CD4-positive, alpha-beta memory T cell (primary cell): ENCODE measurements at regions of chr14 and their contacts with region 1.

Region 1: GRCh38 chr14:23953464-23954278 is at the start of gene DHRS4:
- DNase-seq: peak; percentile 74 to 85 (median 83)
- H3K4me3 ChIP-seq: peak within 1 kb of the TSS; percentile 74 to 82
- H3K4me3 Mint-ChIP-seq: peak within 1 kb of the TSS; percentile 95 to 100 (median 98)
- H3K27ac ChIP-seq: peak within 1 kb of the TSS; percentile 72
- H3K27ac Mint-ChIP-seq: peak within 1 kb of the TSS; percentile 84 to 98 (median 96)
- H3K4me1 ChIP-seq: peaks cover 25% of the 10 kb centered on the region
- H3K4me1 Mint-ChIP-seq: peaks cover 13 to 36% (median 27%) of the 10 kb centered on the region in 4 donors
- H3K27me3 ChIP-seq: no peaks in the 10 kb centered on the region
- H3K27me3 Mint-ChIP-seq: no peaks in the 10 kb centered on the region
- total RNA-seq, gene DHRS4: 14.7 to 15.5 TPM

Region 2: GRCh38 chr14:23610090-23610814 is 343.4 kb before region 1 on chr14:
- CTCF ChIA-PET with region 1: no interaction called
- POLR2A ChIA-PET with region 1: no interaction called
- intact Hi-C with region 1: no loop called
- DNase-seq: peak in 4 of 5 donors; percentile 29 to 45 (median 44)
- H3K4me3 ChIP-seq: no peak overlapping the region
- H3K4me3 Mint-ChIP-seq: peak overlapping the region; percentile 54 to 95 (median 84)
- H3K27ac ChIP-seq: peak overlapping the region; percentile 20
- H3K27ac Mint-ChIP-seq: peak overlapping the region; percentile 77 to 97 (median 93)
- H3K4me1 ChIP-seq: peaks cover 29% of the 10 kb centered on the region
- H3K4me1 Mint-ChIP-seq: peaks cover 24 to 44% (median 30%) of the 10 kb centered on the region in 4 donors
- H3K27me3 ChIP-seq: no peaks in the 10 kb centered on the region
- H3K27me3 Mint-ChIP-seq: peaks cover 0 to 2% of the 10 kb centered on the region in 2 donors

Region 3: DNA sequence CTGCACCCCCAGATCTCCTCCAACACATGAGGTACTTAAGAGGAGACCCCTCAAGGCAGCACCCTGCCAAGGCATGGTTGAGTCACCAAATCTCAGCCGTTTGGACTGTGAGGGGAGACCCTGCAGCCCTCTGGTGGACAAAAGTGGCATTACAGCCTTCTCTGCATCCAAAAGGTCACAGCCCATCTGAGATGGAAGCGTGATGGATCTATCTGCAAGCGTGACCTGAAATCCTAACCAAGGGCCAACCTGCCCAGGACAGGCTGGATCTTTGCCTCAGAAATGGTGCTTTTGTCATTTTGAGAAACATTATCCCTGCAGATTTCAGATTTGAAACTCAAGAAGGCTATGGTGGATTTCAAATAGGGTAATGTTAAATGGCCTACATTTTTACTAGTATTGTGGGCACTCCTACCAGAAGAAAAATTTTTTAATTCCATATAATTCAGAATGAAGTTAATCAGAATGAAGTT is 23.8 kb before region 1 on chr14:
- CTCF ChIA-PET with region 1: interaction called, 15 read pairs
- POLR2A ChIA-PET with region 1: interaction called, 4 read pairs
- intact Hi-C with region 1: loop called (anchors 1 kb)
- DNase-seq: peak; percentile 67 to 73 (median 72)
- H3K4me3 ChIP-seq: no peak overlapping the region
- H3K4me3 Mint-ChIP-seq: no peak overlapping the region
- H3K27ac ChIP-seq: no peak overlapping the region
- H3K27ac Mint-ChIP-seq: no peak overlapping the region
- H3K4me1 ChIP-seq: no peaks in the 10 kb centered on the region
- H3K4me1 Mint-ChIP-seq: peaks cover 0 to 2% (median 0%) of the 10 kb centered on the region in 4 donors
- H3K27me3 ChIP-seq: no peaks in the 10 kb centered on the region
- H3K27me3 Mint-ChIP-seq: peaks cover 2 to 6% of the 10 kb centered on the region in 2 donors

Region 4: DNA sequence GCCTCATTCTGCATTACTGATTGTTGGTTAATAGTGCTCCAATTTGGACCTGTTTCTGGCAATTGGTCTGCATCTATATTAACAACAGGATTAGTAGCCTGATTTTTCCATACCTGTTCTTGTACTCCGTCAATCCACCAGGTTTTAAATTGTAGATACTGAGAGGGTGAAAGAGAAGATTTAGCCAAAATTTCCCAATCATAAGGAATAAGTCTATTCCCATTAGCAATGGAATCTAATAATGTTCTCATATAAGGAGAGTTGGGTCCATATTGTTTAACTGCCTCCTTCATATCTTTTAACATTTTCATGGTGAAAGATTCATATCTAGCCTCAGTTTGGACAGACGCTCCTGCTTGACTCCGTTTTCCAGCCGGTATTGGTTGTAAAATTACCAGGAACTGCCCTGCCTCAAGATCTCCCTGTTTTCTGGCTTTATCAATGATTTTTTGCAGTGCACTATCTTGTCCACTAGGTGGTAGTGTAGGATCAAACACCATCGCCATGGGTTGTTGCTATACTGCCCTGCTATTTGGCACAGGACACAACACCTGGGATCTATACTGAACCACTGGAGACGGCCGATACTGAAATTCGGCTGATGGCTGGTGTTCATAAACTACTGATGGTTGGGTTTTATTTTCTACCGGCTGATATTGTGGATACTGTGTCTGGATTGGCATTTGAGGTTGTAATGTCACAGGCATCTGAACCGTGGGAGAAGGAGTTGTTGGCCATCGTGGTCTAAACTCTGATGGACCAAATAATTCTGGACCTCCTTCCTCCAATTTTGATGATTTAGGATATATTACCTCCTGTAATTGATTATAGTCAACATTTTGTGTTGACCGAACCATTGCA is 60.2 kb after region 1 on chr14:
- CTCF ChIA-PET with region 1: interaction called, 4 read pairs
- POLR2A ChIA-PET with region 1: no interaction called
- intact Hi-C with region 1: loop called (anchors 10 kb)
- DNase-seq: peak; percentile 60 to 77 (median 70)
- H3K4me3 ChIP-seq: no peak overlapping the region
- H3K4me3 Mint-ChIP-seq: no peak overlapping the region
- H3K27ac ChIP-seq: no peak overlapping the region
- H3K27ac Mint-ChIP-seq: no peak overlapping the region
- H3K4me1 ChIP-seq: peaks cover 19% of the 10 kb centered on the region
- H3K4me1 Mint-ChIP-seq: peaks cover 19 to 27% (median 23%) of the 10 kb centered on the region in 4 donors
- H3K27me3 ChIP-seq: no peaks in the 10 kb centered on the region
- H3K27me3 Mint-ChIP-seq: peaks cover 0 to 3% of the 10 kb centered on the region in 2 donors

Region 5: GRCh38 chr14:24262821-24263761 is 309.4 kb after region 1 on chr14 and contains the start of gene TGM1:
- CTCF ChIA-PET with region 1: no interaction called
- POLR2A ChIA-PET with region 1: no interaction called
- intact Hi-C with region 1: no loop called
- DNase-seq: no peak
- H3K4me3 ChIP-seq: no peak within 1 kb of the TSS
- H3K4me3 Mint-ChIP-seq: no peak within 1 kb of the TSS
- H3K27ac ChIP-seq: no peak within 1 kb of the TSS
- H3K27ac Mint-ChIP-seq: peak within 1 kb of the TSS in 3 of 7 donors; percentile 8 to 46 (median 37)
- H3K4me1 ChIP-seq: no peaks in the 10 kb centered on the region
- H3K4me1 Mint-ChIP-seq: peaks cover 0 to 5% (median 0%) of the 10 kb centered on the region in 4 donors
- H3K27me3 ChIP-seq: no peaks in the 10 kb centered on the region
- H3K27me3 Mint-ChIP-seq: no peaks in the 10 kb centered on the region
- total RNA-seq, gene TGM1: 11.0 to 16.1 TPM